ENCODE measurements at regions of chr11 and their contacts with region 1.

Region 1: GRCh38 chr11:8263769-8264410 is at the start of gene LMO1:
- DNase-seq: peak; percentile 62
- H3K4me3 ChIP-seq: no peak within 1 kb of the TSS
- H3K27ac ChIP-seq: no peak within 1 kb of the TSS
- H3K4me1 ChIP-seq: no peaks in the 10 kb centered on the region
- CTCF ChIP-seq: peak; percentile 87
- total RNA-seq, gene LMO1: not detected in 2 replicates

Region 2: DNA sequence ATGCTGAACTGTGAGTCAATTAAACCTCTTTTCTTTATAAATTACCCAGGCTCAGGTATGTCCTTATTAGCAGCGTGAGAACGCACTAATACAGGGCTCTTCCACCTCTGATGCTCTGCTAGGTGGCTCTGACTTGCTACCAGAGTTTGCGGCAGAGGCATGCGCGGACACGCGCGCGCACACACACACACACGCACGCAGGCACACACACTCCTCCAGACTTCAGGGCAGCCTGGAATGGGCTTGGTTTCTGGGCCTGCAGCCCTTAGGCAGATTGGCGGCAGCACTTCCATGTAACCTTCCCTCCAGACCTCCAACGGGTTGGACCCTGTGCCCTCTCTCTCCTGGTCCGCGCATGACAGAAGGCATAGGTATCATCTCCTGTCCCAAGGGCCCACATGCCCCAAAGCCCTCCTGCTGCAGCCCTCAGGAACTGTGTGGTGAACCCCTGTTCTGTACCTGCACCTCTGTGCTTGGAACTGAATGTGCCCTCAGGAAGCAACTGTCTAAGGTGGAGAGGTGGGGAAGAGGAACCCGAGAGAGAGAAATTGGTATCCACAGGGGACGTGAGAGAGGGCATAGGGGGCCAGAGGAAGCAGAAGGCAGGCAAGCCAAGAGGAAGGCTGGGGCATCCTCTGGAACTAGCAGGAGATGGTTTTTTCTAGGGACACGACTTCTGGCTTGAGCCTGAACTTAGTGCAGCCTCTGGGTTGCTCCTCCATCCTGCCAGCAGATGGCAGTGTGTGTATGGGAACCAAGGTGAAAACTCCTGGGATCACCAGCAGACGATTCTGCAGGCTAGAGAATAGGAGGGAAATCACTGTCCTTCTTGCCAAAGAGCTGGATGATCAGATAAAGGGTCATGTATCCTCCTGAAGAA is 71.6 kb before region 1 on chr11:
- CTCF ChIA-PET with region 1: no interaction called
- POLR2A ChIA-PET with region 1: no interaction called
- intact Hi-C with region 1: loop called (anchors 5 kb)
- DNase-seq: peak; percentile 54
- H3K4me3 ChIP-seq: no peak overlapping the region
- H3K27ac ChIP-seq: no peak overlapping the region
- H3K4me1 ChIP-seq: no peaks in the 10 kb centered on the region
- CTCF ChIP-seq: peak; percentile 83

Region 3: DNA sequence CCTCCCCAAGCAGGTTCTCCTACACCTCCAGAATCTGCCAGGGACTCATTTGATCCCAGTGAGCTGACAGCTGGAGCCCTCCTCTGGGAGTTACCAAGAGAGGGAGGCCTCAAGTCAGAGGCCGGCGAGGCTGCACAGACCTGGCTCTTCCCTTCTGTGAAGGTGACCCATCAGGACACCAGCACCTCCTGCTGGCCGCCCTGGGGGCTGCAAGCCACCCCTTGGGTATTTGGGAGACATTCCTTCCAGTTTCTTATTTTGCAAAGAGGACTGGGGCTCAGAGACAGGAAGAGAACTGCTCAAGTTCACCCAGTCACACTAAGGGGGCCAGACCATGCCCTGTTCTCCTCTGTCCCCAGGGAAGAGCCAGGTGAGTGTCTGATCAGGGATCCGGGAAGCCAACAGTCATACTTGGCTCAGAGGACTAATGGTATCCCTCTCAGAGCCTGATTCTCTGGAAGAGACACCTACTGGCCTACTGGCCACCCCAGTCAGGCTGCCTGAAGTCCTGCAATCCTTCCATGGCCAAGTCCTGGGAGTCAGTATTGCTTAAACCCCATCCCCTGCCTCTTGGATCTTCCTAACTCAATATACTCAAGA is 54.6 kb before region 1 on chr11:
- CTCF ChIA-PET with region 1: no interaction called
- POLR2A ChIA-PET with region 1: no interaction called
- intact Hi-C with region 1: no loop called
- DNase-seq: no peak
- H3K4me3 ChIP-seq: no peak overlapping the region
- H3K27ac ChIP-seq: no peak overlapping the region
- H3K4me1 ChIP-seq: no peaks in the 10 kb centered on the region
- CTCF ChIP-seq: peak; percentile 75

Region 4: GRCh38 chr11:8225589-8226036 is 38.3 kb before region 1 on chr11:
- CTCF ChIA-PET with region 1: no interaction called
- POLR2A ChIA-PET with region 1: no interaction called
- intact Hi-C with region 1: loop called (anchors 5 kb)
- DNase-seq: peak; percentile 56
- H3K4me3 ChIP-seq: no peak overlapping the region
- H3K27ac ChIP-seq: no peak overlapping the region
- H3K4me1 ChIP-seq: no peaks in the 10 kb centered on the region
- CTCF ChIP-seq: peak; percentile 93

Region 5: GRCh38 chr11:8298801-8299786 is 35.2 kb after region 1 on chr11:
- CTCF ChIA-PET with region 1: no interaction called
- POLR2A ChIA-PET with region 1: no interaction called
- intact Hi-C with region 1: no loop called
- DNase-seq: no peak
- H3K4me3 ChIP-seq: no peak overlapping the region
- H3K27ac ChIP-seq: no peak overlapping the region
- H3K4me1 ChIP-seq: no peaks in the 10 kb centered on the region
- CTCF ChIP-seq: no peak

Measured in OCI-LY7 (cell line).